PC-9 (cell line): ENCODE measurements at regions of chr1 and their contacts with region 1.

Region 1: GRCh38 chr1:205095422-205095821 is 11.2 kb upstream of the TMEM81 start:
- DNase-seq: no peak
- H3K4me3 ChIP-seq: no peak overlapping the region
- H3K27ac ChIP-seq: no peak overlapping the region
- H3K4me1 ChIP-seq: no peaks in the 10 kb centered on the region
- H3K27me3 ChIP-seq: no peaks in the 10 kb centered on the region
- CTCF ChIP-seq: no peak

Region 2: GRCh38 chr1:204633665-204634064 is 461.8 kb before region 1 on chr1:
- CTCF ChIA-PET with region 1: no interaction called
- POLR2A ChIA-PET with region 1: interaction called, 14 read pairs
- intact Hi-C with region 1: no loop called
- DNase-seq: no peak
- H3K4me3 ChIP-seq: no peak overlapping the region
- H3K27ac ChIP-seq: no peak overlapping the region
- H3K4me1 ChIP-seq: no peaks in the 10 kb centered on the region
- H3K27me3 ChIP-seq: peaks cover 6% of the 10 kb centered on the region; the same call in 1 of the 2 replicates
- CTCF ChIP-seq: no peak

Region 3: GRCh38 chr1:204915861-204916495 is 179.4 kb before region 1 on chr1:
- CTCF ChIA-PET with region 1: no interaction called
- POLR2A ChIA-PET with region 1: no interaction called
- intact Hi-C with region 1: no loop called
- DNase-seq: no peak
- H3K4me3 ChIP-seq: no peak overlapping the region
- H3K27ac ChIP-seq: no peak overlapping the region
- H3K4me1 ChIP-seq: no peaks in the 10 kb centered on the region; the same call in 1 of the 2 replicates
- H3K27me3 ChIP-seq: peaks cover 25% of the 10 kb centered on the region
- CTCF ChIP-seq: no peak

Region 4: DNA sequence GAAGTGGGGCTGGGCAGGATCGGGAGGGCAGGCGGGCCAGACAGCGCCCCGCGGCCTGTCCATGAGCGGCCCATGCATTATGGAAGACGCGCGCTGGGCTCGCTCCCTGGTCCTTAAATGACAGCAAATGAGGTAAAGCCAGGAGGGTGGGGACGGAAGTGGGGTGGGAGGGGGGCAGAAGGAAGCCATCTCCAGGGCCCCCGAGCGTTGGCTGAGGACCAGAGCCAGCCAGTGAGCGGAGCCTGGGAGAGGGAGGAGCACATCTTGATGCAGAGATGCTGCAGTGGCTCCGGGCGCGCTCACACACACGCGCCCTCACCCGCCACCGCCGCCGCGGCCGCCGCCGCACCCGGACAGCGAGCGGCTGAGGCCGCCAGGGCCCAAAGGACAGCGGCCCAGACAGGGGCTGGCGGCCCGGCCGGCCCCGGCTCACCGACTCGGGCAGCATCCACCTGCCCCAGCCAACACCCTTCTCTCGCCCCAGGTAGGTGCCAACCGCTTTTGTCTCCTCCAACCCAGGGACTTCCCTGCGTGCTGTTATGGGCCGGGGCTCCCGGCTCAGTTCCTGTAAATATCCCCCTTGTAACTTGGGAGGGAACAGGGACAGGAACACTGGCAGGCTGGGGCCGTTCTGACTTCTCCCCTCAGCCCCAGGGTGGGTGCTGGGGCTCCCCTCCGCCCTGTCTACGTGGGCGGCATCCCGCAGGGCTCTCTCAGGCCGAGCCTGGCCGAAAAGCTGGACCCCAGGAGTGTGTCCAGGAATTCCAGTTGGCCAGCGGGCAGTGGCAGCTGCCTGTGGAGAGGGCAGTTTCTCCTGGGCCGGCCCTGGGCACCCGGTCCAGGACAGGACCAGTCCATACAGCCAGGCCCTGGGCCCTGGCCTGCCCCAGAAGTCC is 52.3 kb before region 1 on chr1 and contains the start of gene CNTN2:
- CTCF ChIA-PET with region 1: no interaction called
- POLR2A ChIA-PET with region 1: no interaction called
- intact Hi-C with region 1: no loop called
- DNase-seq: no peak
- H3K4me3 ChIP-seq: no peak within 1 kb of the TSS
- H3K27ac ChIP-seq: no peak within 1 kb of the TSS
- H3K4me1 ChIP-seq: no peaks in the 10 kb centered on the region
- H3K27me3 ChIP-seq: peaks cover 98% of the 10 kb centered on the region
- CTCF ChIP-seq: no peak
- total RNA-seq, gene CNTN2: not detected in 2 replicates

Region 5: DNA sequence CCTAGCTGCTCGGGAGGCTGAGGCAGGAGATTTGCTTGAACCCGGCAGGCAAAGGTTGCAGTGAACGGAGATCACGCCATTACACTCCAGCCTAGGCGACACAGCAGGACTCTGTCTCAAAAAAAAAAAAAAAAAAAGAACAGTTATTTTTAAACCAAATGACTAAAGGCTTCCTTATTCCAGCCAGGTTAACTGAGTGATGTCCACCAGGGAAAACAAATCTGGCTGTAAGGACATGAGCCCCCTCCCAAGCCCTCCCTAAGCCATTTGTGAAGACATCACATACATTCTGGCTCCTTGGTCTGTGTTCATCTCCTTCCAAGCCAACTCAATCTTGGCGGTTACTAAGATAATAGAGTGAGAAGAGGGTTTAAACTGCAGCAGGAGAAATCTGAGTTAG is 140.5 kb after region 1 on chr1:
- CTCF ChIA-PET with region 1: interaction called, 13 read pairs
- POLR2A ChIA-PET with region 1: no interaction called
- intact Hi-C with region 1: no loop called
- DNase-seq: no peak
- H3K4me3 ChIP-seq: no peak overlapping the region
- H3K27ac ChIP-seq: no peak overlapping the region
- H3K4me1 ChIP-seq: no peaks in the 10 kb centered on the region
- H3K27me3 ChIP-seq: peaks cover 27% of the 10 kb centered on the region
- CTCF ChIP-seq: no peak